T-cell (primary cell): ENCODE measurements at regions of chr5 and their contacts with region 1.

Region 1: GRCh38 chr5:78779771-78780616 is 131.4 kb upstream of the LHFPL2 start:
- DNase-seq: no peak
- ATAC-seq: no peak
- H3K4me3 ChIP-seq: no peak overlapping the region
- H3K4me3 Mint-ChIP-seq: no peak overlapping the region
- H3K27ac ChIP-seq: no peak overlapping the region
- H3K27ac Mint-ChIP-seq: no peak overlapping the region
- H3K4me1 ChIP-seq: no peaks in the 10 kb centered on the region
- H3K4me1 Mint-ChIP-seq: peaks cover 0 to 4% (median 4%) of the 10 kb centered on the region in 3 donors
- H3K27me3 ChIP-seq: no peaks in the 10 kb centered on the region
- H3K27me3 Mint-ChIP-seq: no peaks in the 10 kb centered on the region

Region 2: GRCh38 chr5:78717674-78718625 is 62.0 kb before region 1 on chr5:
- CTCF ChIA-PET with region 1: no interaction called
- POLR2A ChIA-PET with region 1: no interaction called
- DNase-seq: no peak
- ATAC-seq: peak in 1 of 4 experiments; percentile 20
- H3K4me3 ChIP-seq: no peak overlapping the region
- H3K4me3 Mint-ChIP-seq: no peak overlapping the region
- H3K27ac ChIP-seq: no peak overlapping the region
- H3K27ac Mint-ChIP-seq: no peak overlapping the region
- H3K4me1 ChIP-seq: no peaks in the 10 kb centered on the region
- H3K4me1 Mint-ChIP-seq: no peaks in the 10 kb centered on the region
- H3K27me3 ChIP-seq: peaks cover 0 to 12% of the 10 kb centered on the region in 2 experiments
- H3K27me3 Mint-ChIP-seq: peaks cover 0 to 3% of the 10 kb centered on the region in 2 donors

Region 3: GRCh38 chr5:78813906-78814530 is 34.0 kb after region 1 on chr5:
- CTCF ChIA-PET with region 1: no interaction called
- POLR2A ChIA-PET with region 1: interaction called in 1 of 2 experiments, 11 read pairs
- DNase-seq: no peak
- ATAC-seq: no peak
- H3K4me3 ChIP-seq: no peak overlapping the region
- H3K4me3 Mint-ChIP-seq: no peak overlapping the region
- H3K27ac ChIP-seq: no peak overlapping the region
- H3K27ac Mint-ChIP-seq: no peak overlapping the region
- H3K4me1 ChIP-seq: no peaks in the 10 kb centered on the region
- H3K4me1 Mint-ChIP-seq: no peaks in the 10 kb centered on the region
- H3K27me3 ChIP-seq: no peaks in the 10 kb centered on the region
- H3K27me3 Mint-ChIP-seq: no peaks in the 10 kb centered on the region

Region 4: DNA sequence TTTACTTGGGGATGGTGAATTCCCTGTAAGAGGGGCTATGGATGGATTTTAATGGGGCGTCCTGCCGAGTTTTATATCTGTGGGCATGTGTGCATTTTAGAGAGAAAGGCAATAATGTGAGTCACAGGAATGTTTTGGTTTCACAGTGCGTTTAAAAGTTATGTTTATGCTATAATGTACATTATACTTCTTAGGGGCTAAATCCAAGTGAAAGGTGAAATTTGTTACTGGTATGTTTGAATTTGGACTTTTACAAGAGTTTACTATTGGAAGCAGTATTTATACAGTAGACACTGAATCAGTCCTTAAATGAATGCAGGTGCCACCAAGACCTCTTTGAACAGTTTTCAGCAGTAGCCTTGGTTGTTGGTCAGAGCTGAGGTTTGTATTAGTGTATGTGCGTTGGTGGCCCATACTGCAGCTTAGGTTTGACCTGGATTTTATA is 461.6 kb after region 1 on chr5:
- CTCF ChIA-PET with region 1: no interaction called
- POLR2A ChIA-PET with region 1: interaction called in 1 of 2 experiments, 10 read pairs
- DNase-seq: no peak
- ATAC-seq: no peak
- H3K4me3 ChIP-seq: no peak overlapping the region
- H3K4me3 Mint-ChIP-seq: peak overlapping the region; percentile 49 to 96 (median 55)
- H3K27ac ChIP-seq: no peak overlapping the region
- H3K27ac Mint-ChIP-seq: no peak overlapping the region
- H3K4me1 ChIP-seq: peaks cover 24 to 40% of the 10 kb centered on the region in 2 experiments
- H3K4me1 Mint-ChIP-seq: peaks cover 76 to 85% (median 79%) of the 10 kb centered on the region in 3 donors
- H3K27me3 ChIP-seq: no peaks in the 10 kb centered on the region
- H3K27me3 Mint-ChIP-seq: no peaks in the 10 kb centered on the region